Activated CD8-positive, alpha-beta T cell treated with anti-CD3 and anti-CD28 coated beads, Interleukin-2, amount 10 ng/mL, durations not matched to agents 7 days and 5 days (primary cell): ENCODE measurements at regions of chr15 and their contacts with region 1.

Region 1: DNA sequence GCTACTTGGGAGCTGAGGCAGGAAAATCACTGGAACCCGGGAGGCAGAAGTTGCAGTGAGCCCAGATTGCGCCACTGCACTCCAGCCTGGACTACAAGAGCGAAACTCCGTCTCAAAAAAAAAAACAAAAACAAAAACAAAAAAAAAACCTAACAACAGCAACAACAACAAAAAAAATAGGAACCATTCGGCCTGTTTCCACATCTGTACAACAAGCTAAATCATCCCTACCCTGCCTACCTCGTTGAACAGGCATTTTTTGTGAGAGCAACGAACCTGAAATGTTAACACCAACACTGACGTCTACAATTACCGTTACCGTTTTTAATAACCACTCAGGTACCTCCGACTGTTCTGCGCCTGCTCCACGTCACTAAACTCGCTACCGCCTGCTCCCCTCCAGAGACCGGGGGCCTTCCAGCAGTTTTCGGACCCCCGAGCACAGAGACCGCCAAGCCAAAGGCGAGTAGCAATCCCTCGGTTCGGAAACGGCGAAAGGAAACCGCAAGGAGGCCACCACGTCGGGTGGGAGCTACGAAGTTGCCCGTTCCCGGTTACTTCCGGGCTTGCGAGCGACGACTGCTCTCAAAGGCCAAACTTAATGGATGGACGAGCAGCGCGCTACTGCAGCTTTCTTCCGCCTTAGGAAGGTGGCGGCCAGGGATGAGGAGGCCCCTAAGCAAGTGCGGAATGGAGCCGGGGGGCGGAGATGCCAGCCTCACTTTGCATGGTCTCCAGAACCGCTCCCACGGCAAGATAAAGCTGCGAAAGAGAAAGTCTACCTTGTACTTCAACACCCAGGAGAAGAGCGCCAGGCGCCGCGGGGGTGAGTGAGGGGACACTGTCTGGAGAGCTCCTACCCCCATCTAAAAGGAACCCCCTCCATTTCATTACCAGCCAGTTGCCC is at the starts of genes PIGB and PIGBOS1:
- DNase-seq: peak; percentile 87
- ATAC-seq: peak; percentile 94
- H3K4me3 Mint-ChIP-seq: peak within 1 kb of the TSS; percentile 98
- H3K27ac Mint-ChIP-seq: peak within 1 kb of the TSS; percentile 100
- H3K4me1 Mint-ChIP-seq: peaks cover 55% of the 10 kb centered on the region
- H3K27me3 Mint-ChIP-seq: no peaks in the 10 kb centered on the region
- total RNA-seq, gene PIGB: 16.4 to 23.7 TPM
- total RNA-seq, gene PIGBOS1: 8.9 to 12.2 TPM

Region 2: DNA sequence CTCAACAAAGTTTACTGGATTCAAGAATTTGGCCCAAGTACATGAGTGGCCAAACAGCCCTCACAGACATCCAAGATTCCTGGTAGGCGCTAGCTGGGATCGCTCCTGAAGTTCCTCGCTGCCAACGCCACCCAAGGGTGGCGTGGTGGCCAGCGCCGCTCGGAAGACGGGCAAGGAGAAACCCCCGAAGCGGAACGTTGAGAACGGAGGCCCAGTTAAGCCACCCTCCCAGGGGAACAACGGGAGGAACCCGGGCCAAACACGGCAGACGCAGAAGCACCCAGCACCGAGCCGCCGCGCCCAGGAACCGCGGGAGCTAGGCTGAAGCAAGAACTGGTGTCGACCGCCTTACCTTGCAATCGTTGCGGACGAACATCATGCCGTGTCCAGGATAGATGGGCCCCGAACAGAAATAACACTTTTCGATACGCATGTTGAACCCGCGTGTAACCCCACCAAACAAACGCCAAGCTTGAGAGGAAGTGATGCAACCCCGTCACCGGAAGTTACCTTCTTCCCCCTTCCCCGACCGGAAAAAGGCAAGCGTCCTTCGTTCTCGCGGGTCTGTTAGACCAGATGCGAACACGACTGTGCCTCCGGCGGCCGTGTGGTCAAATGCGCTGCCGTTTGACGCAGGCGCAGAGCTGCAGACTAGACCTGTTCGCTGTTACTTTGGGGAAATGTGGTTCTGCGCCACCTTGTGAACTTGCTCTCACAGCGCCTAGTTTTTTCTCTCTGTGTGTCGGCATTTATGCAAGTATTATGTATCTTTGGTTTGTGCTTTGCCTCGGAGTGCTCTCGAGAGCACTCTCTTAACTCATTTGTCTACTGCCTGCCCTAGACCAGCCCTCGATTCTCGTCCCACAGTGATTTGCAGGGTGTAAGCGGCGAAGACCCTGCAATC is 122.1 kb before region 1 on chr15 and contains the start of gene RSL24D1:
- CTCF ChIA-PET with region 1: interaction called, 4 read pairs
- POLR2A ChIA-PET with region 1: interaction called, 17 read pairs
- DNase-seq: peak; percentile 98
- ATAC-seq: peak; percentile 98
- H3K4me3 Mint-ChIP-seq: no peak within 1 kb of the TSS
- H3K27ac Mint-ChIP-seq: no peak within 1 kb of the TSS
- H3K4me1 Mint-ChIP-seq: peaks cover 15% of the 10 kb centered on the region
- H3K27me3 Mint-ChIP-seq: no peaks in the 10 kb centered on the region
- total RNA-seq, gene RSL24D1: 79.6 to 85.2 TPM

Region 3: GRCh38 chr15:55407949-55408791 is 89.3 kb after region 1 on chr15 and contains the starts of genes CCPG1 and PIERCE2:
- CTCF ChIA-PET with region 1: interaction called, 10 read pairs
- POLR2A ChIA-PET with region 1: interaction called, 15 read pairs
- DNase-seq: peak; percentile 91
- ATAC-seq: peak; percentile 96
- H3K4me3 Mint-ChIP-seq: peak within 1 kb of the TSS; percentile 84
- H3K27ac Mint-ChIP-seq: peak within 1 kb of the TSS; percentile 89
- H3K4me1 Mint-ChIP-seq: peaks cover 29% of the 10 kb centered on the region
- H3K27me3 Mint-ChIP-seq: no peaks in the 10 kb centered on the region
- total RNA-seq, gene CCPG1: 8.2 to 10.4 TPM
- total RNA-seq, gene PIERCE2: not detected